ENCODE measurements at regions of chr1 and their contacts with region 1.

Region 1: GRCh38 chr1:55375617-55376258 is 160.6 kb upstream of the USP24 start:
- DNase-seq: no peak
- ATAC-seq: no peak
- H3K4me3 Mint-ChIP-seq: no peak overlapping the region
- H3K27ac Mint-ChIP-seq: no peak overlapping the region
- H3K4me1 Mint-ChIP-seq: no peaks in the 10 kb centered on the region
- H3K27me3 Mint-ChIP-seq: peaks cover 11% of the 10 kb centered on the region

Region 2: DNA sequence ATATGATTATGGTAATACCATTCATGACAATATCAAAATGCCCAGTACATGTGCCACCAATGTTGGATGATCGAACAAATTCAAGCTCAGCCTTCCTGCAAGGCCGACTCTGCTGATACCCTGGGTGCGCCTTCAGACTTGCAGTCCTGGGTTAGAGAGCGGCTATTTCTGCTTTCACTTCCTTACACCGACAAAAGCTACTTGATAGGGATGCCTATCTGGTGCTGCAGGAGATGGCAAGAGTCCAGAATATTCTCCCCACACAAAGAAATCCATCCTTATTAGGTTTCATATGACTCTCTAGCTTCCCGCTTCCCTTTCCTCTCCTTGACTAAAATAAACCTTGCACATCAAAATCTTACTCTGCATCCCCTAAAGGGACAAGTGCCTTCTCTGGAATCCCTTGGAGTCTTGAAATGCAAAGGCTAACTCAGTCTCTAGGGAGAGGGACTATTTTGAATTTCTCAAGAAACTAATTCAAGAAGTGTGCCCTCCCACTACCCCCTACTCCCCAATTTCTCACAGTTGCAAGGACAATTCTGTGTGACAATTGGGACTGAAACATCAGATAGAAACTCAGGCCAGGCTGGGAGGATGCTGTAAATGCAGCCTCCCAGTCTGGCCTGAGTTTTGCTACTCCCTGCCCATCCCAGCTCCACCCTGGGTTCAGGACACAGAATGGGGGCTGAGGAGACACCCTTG is 57.5 kb before region 1 on chr1:
- CTCF ChIA-PET with region 1: no interaction called
- DNase-seq: no peak
- ATAC-seq: no peak
- H3K4me3 Mint-ChIP-seq: no peak overlapping the region
- H3K27ac Mint-ChIP-seq: no peak overlapping the region
- H3K4me1 Mint-ChIP-seq: peaks cover 1% of the 10 kb centered on the region
- H3K27me3 Mint-ChIP-seq: peaks cover 3% of the 10 kb centered on the region

Region 3: GRCh38 chr1:55362558-55362957 is 13.2 kb before region 1 on chr1:
- CTCF ChIA-PET with region 1: interaction called, 10 read pairs
- DNase-seq: no peak
- ATAC-seq: no peak
- H3K4me3 Mint-ChIP-seq: no peak overlapping the region
- H3K27ac Mint-ChIP-seq: no peak overlapping the region
- H3K4me1 Mint-ChIP-seq: peaks cover 5% of the 10 kb centered on the region
- H3K27me3 Mint-ChIP-seq: peaks cover 29% of the 10 kb centered on the region

Region 4: GRCh38 chr1:55428944-55429931 is 53.5 kb after region 1 on chr1:
- CTCF ChIA-PET with region 1: no interaction called
- DNase-seq: no peak
- ATAC-seq: no peak
- H3K4me3 Mint-ChIP-seq: no peak overlapping the region
- H3K27ac Mint-ChIP-seq: no peak overlapping the region
- H3K4me1 Mint-ChIP-seq: no peaks in the 10 kb centered on the region
- H3K27me3 Mint-ChIP-seq: peaks cover 10% of the 10 kb centered on the region

Measured in activated CD8-positive, alpha-beta memory T cell treated with anti-CD3 and anti-CD28 coated beads, Interleukin-2, amount 10 ng/mL, durations not matched to agents 7 days and 5 days (primary cell).